Colonic mucosa (tissue), 4 donors: ENCODE measurements at regions of chr18 and their contacts with region 1.

Region 1: DNA sequence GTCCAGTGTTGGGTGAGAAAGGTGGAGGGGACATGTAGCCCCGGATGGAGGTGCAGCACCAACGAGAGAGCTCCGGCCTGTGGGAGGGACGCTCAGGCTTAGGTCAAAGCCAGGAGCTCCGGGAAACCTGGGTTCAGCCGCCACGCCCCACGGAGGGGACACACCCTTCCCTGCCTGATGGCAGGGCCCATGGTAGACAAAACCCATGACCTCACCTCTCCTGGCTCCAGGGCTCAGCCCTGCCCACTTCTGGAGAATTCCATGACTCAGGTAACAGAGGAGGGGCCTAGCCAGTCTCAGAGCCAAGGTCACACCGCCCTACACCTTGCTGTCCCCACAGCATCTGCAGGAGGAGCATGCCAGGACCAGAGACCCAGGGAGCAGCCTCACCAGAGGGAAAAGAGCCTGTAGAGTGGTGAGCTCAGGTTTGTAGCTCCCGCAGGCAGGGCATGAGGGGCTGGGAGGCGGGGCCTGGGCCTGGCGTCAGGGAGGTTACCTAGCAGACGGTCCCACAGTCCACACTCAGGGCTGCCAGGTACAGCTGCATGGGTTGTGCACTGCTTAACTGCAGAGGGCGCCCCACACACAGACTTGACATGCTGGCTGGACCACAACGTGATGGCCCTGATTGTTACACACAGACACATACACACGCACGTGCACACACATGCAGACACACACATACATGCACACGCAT is 70.8 kb upstream of the SMAD7 start:
- DNase-seq: peak; percentile 93
- H3K4me3 ChIP-seq: peak overlapping the region; percentile 22
- H3K27ac ChIP-seq: peak overlapping the region; percentile 43
- H3K4me1 ChIP-seq: no peaks in the 10 kb centered on the region
- H3K27me3 ChIP-seq: no peaks in the 10 kb centered on the region
- CTCF ChIP-seq: peak; percentile 59

Region 2: DNA sequence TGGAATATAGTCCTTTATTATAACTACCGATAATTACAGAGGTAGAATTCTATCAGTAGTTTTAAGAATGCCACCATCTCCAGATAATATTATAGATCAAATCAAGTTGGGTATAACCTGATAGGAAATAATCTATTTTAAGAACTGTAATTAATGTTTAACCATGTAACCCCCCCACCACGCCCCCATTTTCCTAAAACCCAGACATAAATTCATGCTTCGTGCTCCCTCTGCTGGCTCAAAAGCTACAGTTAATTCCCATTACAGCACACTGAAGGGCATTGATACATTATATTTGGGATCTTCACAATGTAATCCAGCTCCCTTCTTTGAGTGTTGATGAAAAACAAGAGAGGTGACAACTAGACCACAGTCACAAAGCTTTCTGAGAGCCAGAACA is 157.2 kb after region 1 on chr18:
- intact Hi-C with region 1: loop called (anchors 5 kb)
- DNase-seq: peak; percentile 29
- H3K4me3 ChIP-seq: no peak overlapping the region
- H3K27ac ChIP-seq: no peak overlapping the region
- H3K4me1 ChIP-seq: no peaks in the 10 kb centered on the region
- H3K27me3 ChIP-seq: no peaks in the 10 kb centered on the region
- CTCF ChIP-seq: peak; percentile 24

Region 3: GRCh38 chr18:49238433-49239042 is 217.0 kb after region 1 on chr18:
- intact Hi-C with region 1: loop called (anchors 10 kb)
- DNase-seq: no peak
- H3K4me3 ChIP-seq: no peak overlapping the region
- H3K27ac ChIP-seq: no peak overlapping the region
- H3K4me1 ChIP-seq: no peaks in the 10 kb centered on the region
- H3K27me3 ChIP-seq: no peaks in the 10 kb centered on the region
- CTCF ChIP-seq: peak; percentile 35

Region 4: DNA sequence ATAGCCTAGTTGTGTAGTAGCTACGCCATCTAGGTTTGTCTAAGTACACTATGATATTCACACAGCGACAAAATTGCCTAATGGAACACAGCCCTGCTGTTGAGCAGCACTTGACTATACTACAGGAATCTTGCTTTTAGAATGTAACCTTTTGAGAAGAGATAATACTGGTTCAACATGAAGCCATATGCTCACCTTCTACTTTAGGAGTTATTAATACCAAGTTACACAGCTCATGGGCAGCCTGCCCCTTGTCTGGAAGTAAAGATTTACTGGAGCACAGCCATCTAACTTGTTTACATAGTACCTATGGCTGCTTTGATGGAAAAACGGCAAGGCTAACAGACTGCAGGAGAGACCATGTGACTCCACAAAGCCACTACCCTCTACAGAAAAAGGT is 264.0 kb after region 1 on chr18:
- intact Hi-C with region 1: no loop called
- DNase-seq: no peak
- H3K4me3 ChIP-seq: no peak overlapping the region
- H3K27ac ChIP-seq: no peak overlapping the region
- H3K4me1 ChIP-seq: no peaks in the 10 kb centered on the region
- H3K27me3 ChIP-seq: no peaks in the 10 kb centered on the region
- CTCF ChIP-seq: no peak

Region 5: GRCh38 chr18:49677762-49678413 is 656.3 kb after region 1 on chr18:
- intact Hi-C with region 1: no loop called
- DNase-seq: peak; percentile 44
- H3K4me3 ChIP-seq: no peak overlapping the region
- H3K27ac ChIP-seq: peak overlapping the region; percentile 33
- H3K4me1 ChIP-seq: no peaks in the 10 kb centered on the region
- H3K27me3 ChIP-seq: no peaks in the 10 kb centered on the region
- CTCF ChIP-seq: no peak